ENCODE measurements at regions of chr5 and their contacts with region 1.

Region 1: GRCh38 chr5:169176709-169177694 is 123.9 kb downstream of the SLIT3 start:
- DNase-seq: peak; percentile 62
- H3K4me3 ChIP-seq: no peak overlapping the region
- H3K27ac ChIP-seq: peak overlapping the region in 1 of 2 experiments; percentile 95; a peak in 2 of 4 replicates
- H3K4me1 ChIP-seq: peaks cover 0 to 45% of the 10 kb centered on the region in 2 experiments; a peak in 2 of 4 replicates
- H3K27me3 ChIP-seq: no peaks in the 10 kb centered on the region
- CTCF ChIP-seq: no peak
- EP300 ChIP-seq: peak in 1 of 2 experiments; percentile 98; a peak in 2 of 4 replicates
- RAD21 ChIP-seq: peak; percentile 24

Region 2: GRCh38 chr5:169003721-169004541 is 173.1 kb before region 1 on chr5:
- CTCF ChIA-PET with region 1: interaction called, 10 read pairs
- POLR2A ChIA-PET with region 1: no interaction called
- DNase-seq: peak; percentile 72
- H3K4me3 ChIP-seq: 0 out of 4 replicates have a peak overlapping the region, but pooled peaks of 1 of the 2 experiments have one; percentile 1
- H3K27ac ChIP-seq: peak overlapping the region; percentile 86 to 98
- H3K4me1 ChIP-seq: peaks cover 23 to 53% of the 10 kb centered on the region in 2 experiments
- H3K27me3 ChIP-seq: no peaks in the 10 kb centered on the region
- CTCF ChIP-seq: peak; percentile 57
- EP300 ChIP-seq: peak; percentile 10 to 75; a peak in 1 of 4 replicates
- RAD21 ChIP-seq: peak; percentile 78

Region 3: GRCh38 chr5:169511708-169512107 is 334.7 kb after region 1 on chr5:
- CTCF ChIA-PET with region 1: no interaction called
- POLR2A ChIA-PET with region 1: no interaction called
- DNase-seq: no peak
- H3K4me3 ChIP-seq: no peak overlapping the region
- H3K27ac ChIP-seq: peak overlapping the region in 1 of 2 experiments; percentile 60; a peak in 1 of 4 replicates
- H3K4me1 ChIP-seq: peaks cover 0 to 6% of the 10 kb centered on the region in 2 experiments; a peak in 2 of 4 replicates
- H3K27me3 ChIP-seq: no peaks in the 10 kb centered on the region
- CTCF ChIP-seq: peak; percentile 18; the same call in 1 of the 2 replicates
- EP300 ChIP-seq: no peak
- RAD21 ChIP-seq: no peak

Region 4: DNA sequence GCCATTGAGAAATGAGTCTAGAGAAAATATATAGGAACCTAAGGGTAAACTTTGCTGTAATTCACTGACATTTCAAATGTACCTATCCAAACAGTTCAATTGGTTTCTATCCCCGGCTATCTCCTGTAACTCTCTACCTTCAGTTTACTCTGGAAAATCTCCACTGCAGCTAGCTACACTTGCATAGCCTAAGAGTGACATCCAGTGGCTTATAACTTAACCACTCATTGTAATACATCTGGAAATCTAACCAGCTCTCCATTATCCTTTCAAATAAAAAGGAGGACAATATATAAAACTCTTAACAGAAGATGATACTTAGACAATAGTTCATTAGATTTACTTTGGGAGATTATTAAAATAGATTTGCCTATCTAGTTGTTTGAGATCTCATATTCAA is 371.3 kb after region 1 on chr5:
- CTCF ChIA-PET with region 1: interaction called, 10 read pairs
- POLR2A ChIA-PET with region 1: no interaction called
- DNase-seq: peak; percentile 35
- H3K4me3 ChIP-seq: no peak overlapping the region
- H3K27ac ChIP-seq: peak overlapping the region in 1 of 2 experiments; percentile 81; a peak in 2 of 4 replicates
- H3K4me1 ChIP-seq: peaks cover 0 to 23% of the 10 kb centered on the region in 2 experiments; a peak in 2 of 4 replicates
- H3K27me3 ChIP-seq: no peaks in the 10 kb centered on the region
- CTCF ChIP-seq: peak; percentile 76
- EP300 ChIP-seq: 0 out of 4 replicates have a peak, but pooled peaks of 1 of the 2 experiments have one; percentile 20
- RAD21 ChIP-seq: peak; percentile 99